ENCODE measurements at regions of chr11 and their contacts with region 1.

Region 1: DNA sequence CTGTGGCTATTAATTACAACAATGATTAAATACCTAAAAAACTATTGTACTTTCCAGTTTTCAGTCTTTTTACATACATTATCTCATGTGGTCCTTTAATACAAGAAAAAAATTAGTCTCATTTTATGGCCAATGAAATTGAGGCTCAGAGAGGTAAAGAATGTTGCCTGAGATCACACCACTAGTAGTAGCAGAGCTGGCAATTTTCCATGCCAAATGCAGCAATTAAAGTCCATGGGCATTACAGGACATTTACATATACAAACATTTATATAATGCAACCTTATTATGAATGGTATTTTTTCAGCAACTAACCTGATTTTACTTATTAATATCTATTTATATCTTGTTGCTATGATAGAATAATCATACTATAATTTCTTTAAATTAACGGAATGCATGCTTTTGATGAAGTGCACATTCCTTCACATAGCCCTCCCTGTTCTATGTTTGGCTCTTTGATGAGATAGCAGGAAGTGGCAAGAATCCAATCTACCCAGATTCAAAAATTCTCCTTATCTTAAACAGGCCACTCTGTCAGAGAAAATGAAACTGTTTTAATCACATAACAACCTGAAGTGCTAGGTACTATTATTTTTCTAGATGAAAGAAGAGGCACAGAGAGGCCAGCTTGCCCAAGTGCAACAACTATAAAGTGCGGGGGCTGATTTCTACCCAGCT is 120.9 kb upstream of the LDLRAD3 start:
- DNase-seq: no peak
- H3K4me3 Mint-ChIP-seq: no peak overlapping the region
- H3K27ac Mint-ChIP-seq: no peak overlapping the region
- H3K4me1 Mint-ChIP-seq: peaks cover 14% of the 10 kb centered on the region
- H3K27me3 Mint-ChIP-seq: no peaks in the 10 kb centered on the region
- CTCF ChIP-seq: no peak

Region 2: GRCh38 chr11:35711173-35711910 is 111.6 kb before region 1 on chr11:
- CTCF ChIA-PET with region 1: interaction called, 14 read pairs
- intact Hi-C with region 1: no loop called
- DNase-seq: no peak
- H3K4me3 Mint-ChIP-seq: no peak overlapping the region
- H3K27ac Mint-ChIP-seq: no peak overlapping the region
- H3K4me1 Mint-ChIP-seq: peaks cover 2% of the 10 kb centered on the region
- H3K27me3 Mint-ChIP-seq: no peaks in the 10 kb centered on the region
- CTCF ChIP-seq: no peak

Region 3: DNA sequence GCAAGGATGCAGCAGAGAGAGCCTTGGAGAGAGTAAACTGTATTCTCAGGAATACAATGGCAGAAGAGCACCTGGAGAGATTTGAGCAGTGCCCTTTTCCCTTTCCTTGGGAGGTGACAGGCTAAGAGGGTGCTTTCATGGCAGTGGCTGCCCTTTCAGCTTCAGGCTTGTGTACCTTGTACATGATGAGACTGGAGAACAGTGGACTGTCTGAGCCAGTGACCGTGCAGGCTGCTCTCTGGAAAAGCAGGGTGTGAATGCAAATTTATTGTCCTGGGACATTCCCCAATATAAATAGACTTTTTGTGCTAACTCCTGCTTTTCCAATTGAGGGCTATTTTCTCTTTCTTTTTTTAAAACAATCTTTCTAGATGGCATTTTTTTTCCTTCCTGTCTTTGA is 61.1 kb before region 1 on chr11:
- CTCF ChIA-PET with region 1: no interaction called
- intact Hi-C with region 1: no loop called
- DNase-seq: no peak
- H3K4me3 Mint-ChIP-seq: no peak overlapping the region
- H3K27ac Mint-ChIP-seq: no peak overlapping the region
- H3K4me1 Mint-ChIP-seq: peaks cover 33% of the 10 kb centered on the region
- H3K27me3 Mint-ChIP-seq: no peaks in the 10 kb centered on the region
- CTCF ChIP-seq: no peak

Region 4: DNA sequence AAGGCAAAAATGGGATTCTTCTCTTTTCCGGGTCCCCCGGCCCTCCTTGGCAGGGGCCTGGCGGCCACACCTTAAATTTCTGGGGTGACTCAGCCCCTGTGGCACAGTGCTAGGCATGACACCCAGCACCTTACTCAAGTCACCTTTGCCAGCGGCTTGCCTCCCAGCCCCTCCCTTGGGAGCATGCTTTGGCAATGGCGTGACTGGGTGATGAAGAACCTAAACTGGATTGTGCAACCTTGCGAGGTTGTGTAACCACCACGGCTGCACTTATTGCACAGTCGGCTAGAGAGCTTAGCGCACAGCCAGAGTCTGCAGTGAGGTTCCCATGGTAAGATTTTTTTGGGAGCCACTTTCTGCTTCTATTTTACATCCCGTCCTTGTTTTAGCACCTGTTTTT is 104.8 kb after region 1 on chr11:
- CTCF ChIA-PET with region 1: interaction called, 10 read pairs
- intact Hi-C with region 1: no loop called
- DNase-seq: peak; percentile 91
- H3K4me3 Mint-ChIP-seq: peak overlapping the region; percentile 36
- H3K27ac Mint-ChIP-seq: peak overlapping the region; percentile 68
- H3K4me1 Mint-ChIP-seq: no peaks in the 10 kb centered on the region
- H3K27me3 Mint-ChIP-seq: no peaks in the 10 kb centered on the region
- CTCF ChIP-seq: no peak

Region 5: GRCh38 chr11:36041988-36042611 is 219.1 kb after region 1 on chr11:
- CTCF ChIA-PET with region 1: interaction called, 6 read pairs
- intact Hi-C with region 1: loop called (anchors 5 kb)
- DNase-seq: peak; percentile 6
- H3K4me3 Mint-ChIP-seq: no peak overlapping the region
- H3K27ac Mint-ChIP-seq: no peak overlapping the region
- H3K4me1 Mint-ChIP-seq: peaks cover 2% of the 10 kb centered on the region
- H3K27me3 Mint-ChIP-seq: no peaks in the 10 kb centered on the region
- CTCF ChIP-seq: peak; percentile 33

Region 6: GRCh38 chr11:36131721-36132397 is 308.9 kb after region 1 on chr11:
- CTCF ChIA-PET with region 1: interaction called, 23 read pairs
- intact Hi-C with region 1: no loop called
- DNase-seq: peak; percentile 26
- H3K4me3 Mint-ChIP-seq: no peak overlapping the region
- H3K27ac Mint-ChIP-seq: no peak overlapping the region
- H3K4me1 Mint-ChIP-seq: no peaks in the 10 kb centered on the region
- H3K27me3 Mint-ChIP-seq: no peaks in the 10 kb centered on the region
- CTCF ChIP-seq: peak; percentile 18

Region 7: GRCh38 chr11:36258730-36259360 is 435.9 kb after region 1 on chr11:
- CTCF ChIA-PET with region 1: interaction called, 45 read pairs
- intact Hi-C with region 1: no loop called
- DNase-seq: peak; percentile 76
- H3K4me3 Mint-ChIP-seq: no peak overlapping the region
- H3K27ac Mint-ChIP-seq: no peak overlapping the region
- H3K4me1 Mint-ChIP-seq: peaks cover 13% of the 10 kb centered on the region
- H3K27me3 Mint-ChIP-seq: peaks cover 70% of the 10 kb centered on the region
- CTCF ChIP-seq: peak; percentile 62

Region 8: GRCh38 chr11:36478700-36479329 is 655.9 kb after region 1 on chr11:
- CTCF ChIA-PET with region 1: interaction called, 7 read pairs
- intact Hi-C with region 1: loop called (anchors 10 kb)
- DNase-seq: peak; percentile 46
- H3K4me3 Mint-ChIP-seq: no peak overlapping the region
- H3K27ac Mint-ChIP-seq: no peak overlapping the region
- H3K4me1 Mint-ChIP-seq: no peaks in the 10 kb centered on the region
- H3K27me3 Mint-ChIP-seq: no peaks in the 10 kb centered on the region
- CTCF ChIP-seq: peak; percentile 49